ENCODE measurements at regions of chr13 and their contacts with region 1.

Region 1: DNA sequence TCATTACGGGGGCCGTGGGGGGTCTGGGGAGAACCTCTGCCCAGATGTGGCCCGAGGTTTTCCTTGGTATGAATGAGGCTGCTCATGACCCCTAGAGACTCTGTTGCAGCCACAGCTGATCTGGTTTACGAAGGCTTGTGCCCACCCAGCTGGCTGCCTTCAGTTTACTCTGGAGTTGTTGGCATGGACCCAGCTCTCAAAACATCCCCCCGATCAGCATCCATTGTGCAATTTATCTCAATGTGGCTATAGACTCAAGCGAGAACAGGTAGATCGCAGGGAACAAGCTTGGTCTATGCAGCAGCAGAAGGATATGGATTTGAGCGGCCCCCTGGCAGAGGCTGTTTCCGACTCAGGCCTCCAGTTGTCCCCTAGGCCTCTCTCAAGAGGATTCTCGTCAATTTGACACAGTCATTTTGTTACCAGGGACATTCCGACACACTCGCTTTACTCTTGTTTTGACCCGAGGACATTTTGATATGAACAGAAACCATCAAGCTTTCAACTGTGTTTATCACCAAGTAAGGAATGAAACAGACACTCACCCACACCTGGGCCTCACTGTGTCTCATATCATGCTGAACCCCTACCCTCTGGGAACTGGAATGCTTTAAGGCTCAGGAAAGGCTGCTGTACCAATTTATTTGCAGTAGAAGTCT is 161.5 kb downstream of the KATNAL1 start:
- DNase-seq: no peak
- ATAC-seq: no peak
- H3K4me3 ChIP-seq: no peak overlapping the region
- H3K4me3 Mint-ChIP-seq: peak overlapping the region in 2 of 3 donors; percentile 19 to 67
- H3K27ac ChIP-seq: peak overlapping the region; percentile 89
- H3K27ac Mint-ChIP-seq: peak overlapping the region; percentile 96 to 97
- H3K4me1 ChIP-seq: peaks cover 44 to 91% of the 10 kb centered on the region in 2 experiments
- H3K4me1 Mint-ChIP-seq: peaks cover 89 to 96% (median 90%) of the 10 kb centered on the region in 3 donors
- H3K27me3 ChIP-seq: no peaks in the 10 kb centered on the region
- H3K27me3 Mint-ChIP-seq: no peaks in the 10 kb centered on the region

Region 2: GRCh38 chr13:30158774-30159445 is 13.1 kb after region 1 on chr13:
- CTCF ChIA-PET with region 1: interaction called, 4 to 13 read pairs
- POLR2A ChIA-PET with region 1: interaction called, 3 to 7 read pairs
- DNase-seq: peak in 3 of 35 experiments; percentile 4 to 71 (median 20)
- ATAC-seq: peak in 3 of 4 experiments; percentile 70 to 82 (median 72)
- H3K4me3 ChIP-seq: no peak overlapping the region
- H3K4me3 Mint-ChIP-seq: no peak overlapping the region
- H3K27ac ChIP-seq: no peak overlapping the region
- H3K27ac Mint-ChIP-seq: peak overlapping the region; percentile 75 to 78
- H3K4me1 ChIP-seq: peaks cover 2 to 54% of the 10 kb centered on the region in 2 experiments
- H3K4me1 Mint-ChIP-seq: peaks cover 38 to 56% (median 54%) of the 10 kb centered on the region in 3 donors
- H3K27me3 ChIP-seq: no peaks in the 10 kb centered on the region
- H3K27me3 Mint-ChIP-seq: no peaks in the 10 kb centered on the region

Region 3: GRCh38 chr13:30241532-30241931 is 95.7 kb after region 1 on chr13:
- CTCF ChIA-PET with region 1: no interaction called
- POLR2A ChIA-PET with region 1: no interaction called
- DNase-seq: no peak
- ATAC-seq: no peak
- H3K4me3 ChIP-seq: no peak overlapping the region
- H3K4me3 Mint-ChIP-seq: no peak overlapping the region
- H3K27ac ChIP-seq: no peak overlapping the region
- H3K27ac Mint-ChIP-seq: no peak overlapping the region
- H3K4me1 ChIP-seq: no peaks in the 10 kb centered on the region
- H3K4me1 Mint-ChIP-seq: peaks cover 0 to 3% (median 0%) of the 10 kb centered on the region in 3 donors
- H3K27me3 ChIP-seq: no peaks in the 10 kb centered on the region
- H3K27me3 Mint-ChIP-seq: no peaks in the 10 kb centered on the region

Measured in T-cell (primary cell).